ENCODE measurements at regions of chr3 and their contacts with region 1.

Region 1: DNA sequence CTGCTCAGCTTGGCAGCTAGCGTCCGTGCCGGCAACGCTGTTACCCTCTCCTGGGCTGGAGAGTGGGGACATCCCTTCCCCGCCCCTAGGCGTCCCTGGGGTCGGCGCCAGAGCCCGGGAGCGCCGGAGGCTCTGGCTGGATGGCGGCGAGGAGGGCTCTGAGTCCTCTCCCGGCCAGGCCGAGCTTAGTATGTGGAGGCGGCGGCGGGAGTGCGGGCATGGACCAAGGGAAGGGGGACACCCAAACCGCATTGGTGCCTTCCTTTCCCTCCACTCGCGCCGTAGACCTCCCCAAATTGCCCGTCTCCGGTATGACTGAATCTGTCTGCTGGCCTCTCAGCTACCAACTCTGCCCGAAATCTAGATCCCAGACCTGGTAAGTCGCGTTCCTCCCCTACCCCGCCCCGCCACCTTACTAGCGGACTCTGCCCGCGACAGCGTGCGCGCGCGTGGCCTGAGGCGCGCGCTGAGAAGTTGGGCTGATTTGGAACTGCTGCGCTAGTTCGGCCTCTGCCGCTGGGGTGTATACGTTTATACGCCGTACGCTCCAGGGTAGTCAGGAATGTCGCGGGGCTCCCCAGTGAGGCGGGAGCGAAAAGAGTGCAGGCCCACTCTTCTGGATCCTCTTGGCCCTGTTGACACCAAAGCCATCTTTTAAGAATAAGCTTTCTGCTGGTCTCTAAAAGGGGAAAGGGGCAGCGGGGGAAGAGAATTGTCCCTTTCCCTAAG is 12.2 kb downstream of the ZIC1 start:
- DNase-seq: peak in 1 of 10 donors; percentile 84
- H3K4me3 ChIP-seq: peak overlapping the region; percentile 12 to 75 (median 55)
- H3K27ac ChIP-seq: peak overlapping the region; percentile 13 to 97 (median 83)
- H3K27me3 ChIP-seq: peaks cover 0 to 95% (median 59%) of the 10 kb centered on the region in 45 donors
- CTCF ChIP-seq: no peak

Region 2: GRCh38 chr3:147518465-147518864 is 97.1 kb after region 1 on chr3:
- intact Hi-C with region 1: loop called in 1 of 2 experiments (anchors 5 kb)
- DNase-seq: no peak
- H3K4me3 ChIP-seq: no peak overlapping the region
- H3K27ac ChIP-seq: no peak overlapping the region
- H3K27me3 ChIP-seq: no peaks in the 10 kb centered on the region
- CTCF ChIP-seq: no peak

Measured in dorsolateral prefrontal cortex (tissue), 120 donors.